PC-9 (cell line): ENCODE measurements at regions of chr1 and their contacts with region 1.

Region 1: GRCh38 chr1:10398734-10399623 is at the start of gene PGD:
- DNase-seq: peak; percentile 88 to 98
- H3K4me3 ChIP-seq: peak within 1 kb of the TSS; percentile 94
- H3K27ac ChIP-seq: peak within 1 kb of the TSS; percentile 89
- H3K4me1 ChIP-seq: peaks cover 25% of the 10 kb centered on the region
- H3K27me3 ChIP-seq: no peaks in the 10 kb centered on the region
- CTCF ChIP-seq: no peak
- total RNA-seq, gene PGD: 526 and 559 TPM in 2 replicates

Region 2: DNA sequence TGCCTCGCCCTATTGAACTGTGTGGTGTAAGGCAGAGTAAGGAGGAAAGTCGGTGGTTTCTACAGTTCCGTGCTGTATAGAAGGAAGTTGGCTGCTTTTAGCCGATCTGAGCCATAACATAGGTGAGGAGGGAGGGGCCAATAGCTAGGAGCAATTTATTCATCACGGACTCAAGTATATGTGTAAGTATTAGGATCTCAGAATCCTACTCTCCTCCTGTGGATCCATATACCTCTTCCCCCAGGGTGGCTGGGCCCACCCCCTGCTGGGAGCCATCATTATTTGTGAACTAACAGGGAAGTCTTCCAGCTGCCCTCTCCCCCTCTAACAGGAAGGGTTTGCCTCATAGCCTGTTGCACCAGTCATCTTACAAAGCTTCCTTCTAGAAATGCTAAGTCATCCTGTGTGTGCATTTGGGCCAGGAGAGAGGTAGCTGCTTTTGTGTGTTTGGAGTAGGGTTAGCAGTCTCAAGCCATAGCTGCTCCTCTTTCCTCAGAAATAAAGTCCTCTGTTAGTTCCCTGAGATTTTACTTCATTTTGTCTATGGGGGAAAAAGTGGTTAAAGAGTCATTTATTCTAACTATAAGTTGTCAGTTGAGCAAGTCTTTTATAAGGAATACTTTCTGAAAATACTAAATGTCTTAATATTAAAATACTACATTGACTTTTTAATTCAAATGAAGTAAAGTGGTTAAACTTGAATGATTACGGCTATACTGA is 16.4 kb after region 1 on chr1:
- CTCF ChIA-PET with region 1: no interaction called
- POLR2A ChIA-PET with region 1: interaction called, 8 read pairs
- intact Hi-C with region 1: loop called (anchors 1 kb)
- DNase-seq: peak; percentile 87 to 96
- H3K4me3 ChIP-seq: peak overlapping the region; percentile 33; the same call in 1 of the 2 replicates
- H3K27ac ChIP-seq: peak overlapping the region; percentile 100
- H3K4me1 ChIP-seq: peaks cover 52% of the 10 kb centered on the region
- H3K27me3 ChIP-seq: no peaks in the 10 kb centered on the region
- CTCF ChIP-seq: no peak

Region 3: DNA sequence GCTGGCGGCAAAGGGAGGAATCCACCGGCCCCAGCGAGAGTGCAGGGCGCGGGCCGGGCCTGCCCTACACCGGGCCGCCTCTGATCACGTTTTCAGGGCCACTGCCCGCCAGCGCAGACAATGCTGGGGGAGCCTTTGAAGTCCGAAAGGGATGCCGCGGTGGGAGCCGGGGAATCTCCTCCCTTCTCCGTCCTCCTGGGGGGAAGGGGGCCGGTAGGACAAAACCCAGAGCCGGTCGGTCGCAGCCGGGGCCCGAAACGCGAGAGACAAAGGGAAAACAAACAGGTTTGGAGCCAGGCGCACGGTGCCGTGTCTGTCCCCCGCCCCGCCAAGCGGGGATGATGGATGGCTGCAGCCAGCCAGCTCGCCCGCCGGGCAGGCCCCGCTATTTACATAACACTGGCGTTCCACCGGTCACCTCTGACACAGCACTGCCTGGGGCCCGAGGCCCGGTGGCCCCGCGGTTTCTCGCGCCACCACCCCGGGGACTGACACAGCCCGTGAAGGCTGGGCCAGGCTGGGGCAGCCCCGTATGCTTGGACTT is 305.5 kb after region 1 on chr1:
- CTCF ChIA-PET with region 1: no interaction called
- POLR2A ChIA-PET with region 1: no interaction called
- intact Hi-C with region 1: no loop called
- DNase-seq: no peak
- H3K4me3 ChIP-seq: no peak overlapping the region
- H3K27ac ChIP-seq: no peak overlapping the region
- H3K4me1 ChIP-seq: peaks cover 11% of the 10 kb centered on the region
- H3K27me3 ChIP-seq: no peaks in the 10 kb centered on the region
- CTCF ChIP-seq: no peak